Activated CD8-positive, alpha-beta T cell treated with anti-CD3 and anti-CD28 coated beads for 36 hours (primary cell): ENCODE measurements at regions of chr3 and their contacts with region 1.

Region 1: GRCh38 chr3:27467545-27467944 is 16.6 kb downstream of the SLC4A7 start:
- DNase-seq: no peak
- ATAC-seq: peak; percentile 89
- H3K4me3 Mint-ChIP-seq: no peak overlapping the region
- H3K27ac Mint-ChIP-seq: peak overlapping the region; percentile 11
- H3K4me1 Mint-ChIP-seq: peaks cover 12% of the 10 kb centered on the region
- H3K27me3 Mint-ChIP-seq: no peaks in the 10 kb centered on the region
- CTCF ChIP-seq: peak; percentile 63

Region 2: GRCh38 chr3:27312044-27312668 is 155.4 kb before region 1 on chr3:
- CTCF ChIA-PET with region 1: interaction called, 12 read pairs
- POLR2A ChIA-PET with region 1: no interaction called
- intact Hi-C with region 1: no loop called
- DNase-seq: peak; percentile 1
- ATAC-seq: peak; percentile 77
- H3K4me3 Mint-ChIP-seq: no peak overlapping the region
- H3K27ac Mint-ChIP-seq: no peak overlapping the region
- H3K4me1 Mint-ChIP-seq: no peaks in the 10 kb centered on the region
- H3K27me3 Mint-ChIP-seq: no peaks in the 10 kb centered on the region
- CTCF ChIP-seq: peak; percentile 70

Region 3: DNA sequence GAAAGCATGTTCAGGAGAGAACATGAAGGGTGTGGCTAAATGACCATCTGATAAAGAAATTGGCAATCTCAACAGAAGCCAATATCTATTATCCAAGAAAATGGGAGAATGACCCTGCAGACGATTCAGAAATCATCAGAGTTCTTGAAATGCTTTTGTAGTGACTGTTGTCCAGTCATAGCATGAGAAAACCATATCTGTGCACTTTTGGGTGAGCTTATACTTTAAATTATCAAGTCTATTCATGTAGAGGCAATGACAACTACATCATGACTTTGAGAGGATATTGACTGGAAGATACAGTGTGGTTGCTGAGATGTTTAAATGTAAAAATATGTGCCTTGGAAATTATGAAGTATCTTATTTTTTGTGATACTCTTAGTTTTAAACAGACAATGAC is 938.7 kb after region 1 on chr3:
- CTCF ChIA-PET with region 1: no interaction called
- POLR2A ChIA-PET with region 1: no interaction called
- intact Hi-C with region 1: no loop called
- DNase-seq: no peak
- ATAC-seq: no peak
- H3K4me3 Mint-ChIP-seq: no peak overlapping the region
- H3K27ac Mint-ChIP-seq: no peak overlapping the region
- H3K4me1 Mint-ChIP-seq: no peaks in the 10 kb centered on the region
- H3K27me3 Mint-ChIP-seq: no peaks in the 10 kb centered on the region
- CTCF ChIP-seq: no peak